Ovary (tissue), 10 donors: ENCODE measurements at regions of chr2 and their contacts with region 1.

Region 1: DNA sequence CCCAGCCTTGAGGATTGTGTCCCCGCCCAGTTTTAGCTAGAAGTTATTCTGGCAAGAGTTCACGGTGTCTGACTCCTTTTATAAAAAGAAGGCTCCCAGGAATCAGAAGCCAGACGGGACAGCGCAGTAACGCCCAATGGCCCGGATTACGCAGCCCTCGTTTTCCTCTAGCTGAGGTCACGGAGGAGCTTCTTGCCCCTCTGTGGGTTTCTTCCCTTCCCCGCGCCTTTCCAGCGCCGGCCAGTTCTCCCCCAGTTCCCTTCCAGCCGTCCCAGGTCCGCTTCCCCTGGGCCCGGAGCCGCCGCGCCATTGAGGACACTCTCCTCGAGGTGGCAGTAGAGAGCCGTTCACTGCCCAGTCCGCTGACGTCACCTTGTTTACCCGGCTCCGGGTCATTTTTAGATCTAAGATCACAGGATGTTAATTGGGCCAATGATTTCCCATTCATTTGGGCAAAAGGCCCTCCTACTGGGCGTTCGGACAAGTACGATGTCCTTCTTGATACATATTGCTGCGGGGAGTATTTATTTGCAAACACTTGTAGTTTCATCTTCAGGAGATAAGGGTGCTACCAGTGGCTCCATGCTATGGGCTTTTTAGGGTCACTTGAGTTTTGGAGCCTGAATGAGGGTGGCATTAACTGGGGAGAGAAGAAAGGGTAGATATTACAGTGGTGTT is 81.5 kb upstream of the PPM1B start:
- DNase-seq: peak; percentile 66 to 86 (median 84)
- H3K4me3 ChIP-seq: peak overlapping the region; percentile 33
- H3K27ac ChIP-seq: peak overlapping the region in 1 of 2 donors; percentile 23
- H3K4me1 ChIP-seq: no peaks in the 10 kb centered on the region
- H3K27me3 ChIP-seq: no peaks in the 10 kb centered on the region
- CTCF ChIP-seq: peak; percentile 80 to 93 (median 85)
- EP300 ChIP-seq: no peak
- POLR2A ChIP-seq: no peak

Region 2: DNA sequence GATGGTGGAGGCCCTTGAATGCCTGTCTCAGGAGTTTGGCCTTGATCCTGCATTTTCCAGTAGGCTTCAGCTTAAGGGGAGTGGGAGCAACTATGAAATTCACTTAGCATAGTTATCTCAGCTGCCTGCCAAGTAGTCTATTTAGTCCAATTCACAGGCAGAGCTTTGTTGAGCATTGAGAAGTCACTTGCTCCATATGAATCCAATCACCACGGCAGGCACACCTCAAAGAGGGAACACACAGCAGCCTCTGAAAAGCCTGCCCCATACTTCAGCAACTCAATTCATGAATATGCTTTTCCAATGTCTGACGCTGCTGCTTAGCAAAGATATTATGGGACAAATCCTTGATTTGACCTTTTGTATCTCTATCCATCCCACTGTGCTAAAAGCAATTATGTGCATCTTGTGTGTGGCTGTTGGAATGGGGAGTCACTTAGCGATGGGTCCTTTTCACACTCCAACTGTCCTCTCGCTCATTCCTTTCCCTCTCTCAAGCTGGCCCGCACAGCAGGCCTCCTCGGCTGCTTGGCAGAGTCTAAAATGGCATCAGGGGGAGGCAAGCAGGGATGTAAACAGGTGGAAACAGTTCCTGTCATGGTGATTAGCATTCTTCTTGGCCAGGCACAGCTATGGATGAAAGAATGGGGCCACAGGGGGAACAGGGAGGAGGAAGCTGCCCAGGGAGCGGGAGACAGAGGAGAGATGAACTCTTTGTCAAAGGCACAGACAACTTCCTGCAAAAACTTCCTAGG is 35.4 kb before region 1 on chr2:
- intact Hi-C with region 1: no loop called
- DNase-seq: no peak
- H3K4me3 ChIP-seq: no peak overlapping the region
- H3K27ac ChIP-seq: no peak overlapping the region
- H3K4me1 ChIP-seq: no peaks in the 10 kb centered on the region
- H3K27me3 ChIP-seq: no peaks in the 10 kb centered on the region
- CTCF ChIP-seq: no peak
- EP300 ChIP-seq: no peak
- POLR2A ChIP-seq: no peak

Region 3: DNA sequence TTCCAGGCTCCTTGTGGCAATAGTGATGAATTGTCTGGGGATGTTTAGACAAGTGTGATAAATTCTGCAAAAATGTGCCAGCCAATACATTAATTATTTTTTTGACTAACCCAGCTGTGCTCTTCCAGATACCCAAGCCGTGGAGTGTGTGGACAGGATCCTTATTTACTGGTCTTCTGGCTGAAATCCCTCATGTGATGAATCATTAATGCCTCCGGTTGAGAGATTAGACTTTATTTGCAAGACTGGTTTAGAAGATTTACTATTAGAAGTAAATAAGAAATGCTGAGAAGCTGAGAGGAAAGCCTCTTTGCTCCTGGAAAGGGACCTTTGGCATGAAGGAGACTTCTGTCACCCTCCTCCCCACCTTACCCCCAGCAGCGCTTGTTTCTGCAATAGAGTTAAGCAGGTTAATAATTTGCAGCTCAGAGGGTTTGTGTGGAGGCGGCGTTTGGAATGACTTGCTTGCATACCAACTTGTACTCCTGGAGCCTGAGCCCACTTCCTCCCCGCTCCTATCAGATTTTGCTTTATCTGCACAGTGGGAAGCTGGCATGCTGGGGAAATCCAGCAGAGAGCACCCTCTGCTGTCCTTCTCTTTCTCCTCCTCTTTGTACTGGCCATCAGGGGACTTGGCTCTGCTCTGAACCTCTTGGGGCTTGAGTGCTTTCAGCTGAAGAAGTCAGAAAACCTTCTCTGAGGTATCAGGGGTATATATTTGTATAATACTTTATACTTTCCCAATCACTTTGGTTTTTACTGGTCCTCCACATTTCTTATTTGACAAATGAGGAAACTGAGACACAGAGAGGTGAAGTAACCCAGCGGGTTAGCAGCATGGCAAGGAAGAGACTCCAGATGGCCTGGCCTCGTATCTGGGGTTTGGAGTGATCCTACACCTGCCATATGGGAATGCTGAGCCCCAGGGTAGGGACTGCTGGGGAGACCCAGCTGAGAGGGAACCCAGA is 204.4 kb after region 1 on chr2:
- intact Hi-C with region 1: loop called in 1 of 4 experiments (anchors 10 kb)
- DNase-seq: no peak
- H3K4me3 ChIP-seq: no peak overlapping the region
- H3K27ac ChIP-seq: no peak overlapping the region
- H3K4me1 ChIP-seq: peaks cover 8% of the 10 kb centered on the region
- H3K27me3 ChIP-seq: no peaks in the 10 kb centered on the region
- CTCF ChIP-seq: no peak
- EP300 ChIP-seq: no peak
- POLR2A ChIP-seq: no peak